ENCODE measurements at regions of chr7 and their contacts with region 1.

Region 1: DNA sequence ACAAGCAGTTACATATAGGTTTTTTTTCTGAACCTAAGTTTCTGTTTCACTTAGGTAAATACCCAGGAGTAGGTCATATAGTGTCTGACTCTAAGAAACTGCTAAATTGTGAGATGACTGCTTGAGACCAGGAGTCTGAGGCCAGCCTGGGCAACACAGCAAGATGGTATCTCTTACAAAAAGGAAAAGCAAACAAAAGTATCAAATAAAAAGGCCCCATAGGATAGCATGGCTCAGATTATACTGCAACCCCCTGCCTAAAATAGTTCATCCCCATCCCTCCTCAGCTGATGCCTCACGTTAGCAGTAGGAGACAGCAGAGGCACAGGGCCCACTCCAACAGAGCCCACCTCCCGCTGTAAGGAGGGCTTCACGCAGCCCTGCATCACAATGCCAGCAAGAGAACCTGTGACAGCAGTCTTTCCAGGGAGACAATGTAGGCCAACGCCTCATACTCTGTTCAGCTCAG is 90.2 kb downstream of the SRPK2 start:
- DNase-seq: peak in 1 of 2 donors; percentile 26
- ATAC-seq: peak; percentile 83 to 86 (median 86)
- H3K4me3 ChIP-seq: no peak overlapping the region
- H3K4me3 Mint-ChIP-seq: peak overlapping the region; percentile 72
- H3K27ac ChIP-seq: peak overlapping the region; percentile 11
- H3K27ac Mint-ChIP-seq: peak overlapping the region; percentile 85 to 91
- H3K4me1 ChIP-seq: peaks cover 17% of the 10 kb centered on the region
- H3K4me1 Mint-ChIP-seq: peaks cover 52 to 61% of the 10 kb centered on the region in 2 donors
- H3K27me3 ChIP-seq: no peaks in the 10 kb centered on the region
- H3K27me3 Mint-ChIP-seq: no peaks in the 10 kb centered on the region
- CTCF ChIP-seq: no peak

Region 2: GRCh38 chr7:105346593-105347322 is 48.3 kb after region 1 on chr7:
- intact Hi-C with region 1: loop called (anchors 5 kb)
- DNase-seq: peak; percentile 43 to 74
- ATAC-seq: peak; percentile 84 to 93 (median 89)
- H3K4me3 ChIP-seq: no peak overlapping the region
- H3K4me3 Mint-ChIP-seq: peak overlapping the region; percentile 68
- H3K27ac ChIP-seq: peak overlapping the region; percentile 58
- H3K27ac Mint-ChIP-seq: peak overlapping the region; percentile 80 to 83
- H3K4me1 ChIP-seq: peaks cover 68% of the 10 kb centered on the region
- H3K4me1 Mint-ChIP-seq: peaks cover 46 to 62% of the 10 kb centered on the region in 2 donors
- H3K27me3 ChIP-seq: no peaks in the 10 kb centered on the region
- H3K27me3 Mint-ChIP-seq: no peaks in the 10 kb centered on the region
- CTCF ChIP-seq: no peak

Measured in natural killer cell (primary cell).